ENCODE measurements at regions of chr17 and their contacts with region 1.

Region 1: GRCh38 chr17:34998205-34998604 is 17.9 kb downstream of the LIG3 start:
- H3K4me3 Mint-ChIP-seq: no peak overlapping the region
- H3K27ac Mint-ChIP-seq: peak overlapping the region; percentile 35
- H3K4me1 Mint-ChIP-seq: peaks cover 27% of the 10 kb centered on the region
- H3K27me3 Mint-ChIP-seq: no peaks in the 10 kb centered on the region

Region 2: DNA sequence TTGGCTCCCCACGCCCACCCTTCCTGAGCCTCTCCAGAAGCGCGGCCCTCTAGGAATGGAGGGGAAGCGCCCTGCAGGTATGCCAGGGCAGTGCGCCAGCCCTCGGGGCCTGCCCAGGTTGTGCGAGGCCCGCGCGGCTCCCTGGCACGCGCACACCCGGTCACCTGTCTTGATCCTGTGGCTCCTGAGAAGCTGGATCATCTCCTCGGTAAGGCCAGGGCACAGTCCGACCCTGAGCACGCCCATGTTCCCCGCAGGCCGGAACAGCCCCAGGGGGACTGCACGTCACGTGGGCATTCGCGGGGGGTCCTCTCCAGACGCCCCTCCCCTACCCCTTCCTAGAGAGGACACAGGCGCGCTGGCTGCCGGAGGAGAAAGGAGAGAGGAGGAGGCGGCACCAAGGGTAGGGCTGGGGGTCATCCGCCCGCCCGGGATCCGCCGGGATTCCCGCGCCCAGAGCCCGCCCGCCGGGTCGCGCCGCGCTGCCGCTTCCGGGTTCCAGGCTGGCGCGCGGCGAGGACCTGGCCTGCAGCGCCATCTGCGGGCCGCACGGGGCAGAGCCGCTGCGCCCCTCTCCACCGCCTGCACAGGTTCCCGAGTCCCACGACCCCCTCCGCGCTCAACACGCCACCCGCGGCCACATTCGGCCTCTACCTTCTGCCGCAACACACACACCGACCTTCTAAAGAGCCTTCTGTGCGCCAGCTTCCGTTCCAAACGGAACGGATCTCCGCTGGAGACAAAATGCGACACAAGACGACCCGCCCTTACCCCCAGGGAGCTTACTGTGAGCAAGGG is 121.4 kb after region 1 on chr17 and contains the start of gene RAD51D:
- intact Hi-C with region 1: loop called (anchors 1 kb)
- H3K4me3 Mint-ChIP-seq: peak within 1 kb of the TSS; percentile 85
- H3K27ac Mint-ChIP-seq: peak within 1 kb of the TSS; percentile 86
- H3K4me1 Mint-ChIP-seq: peaks cover 26% of the 10 kb centered on the region
- H3K27me3 Mint-ChIP-seq: peaks cover 4% of the 10 kb centered on the region